ENCODE measurements at regions of chr14 and their contacts with region 1.

Region 1: DNA sequence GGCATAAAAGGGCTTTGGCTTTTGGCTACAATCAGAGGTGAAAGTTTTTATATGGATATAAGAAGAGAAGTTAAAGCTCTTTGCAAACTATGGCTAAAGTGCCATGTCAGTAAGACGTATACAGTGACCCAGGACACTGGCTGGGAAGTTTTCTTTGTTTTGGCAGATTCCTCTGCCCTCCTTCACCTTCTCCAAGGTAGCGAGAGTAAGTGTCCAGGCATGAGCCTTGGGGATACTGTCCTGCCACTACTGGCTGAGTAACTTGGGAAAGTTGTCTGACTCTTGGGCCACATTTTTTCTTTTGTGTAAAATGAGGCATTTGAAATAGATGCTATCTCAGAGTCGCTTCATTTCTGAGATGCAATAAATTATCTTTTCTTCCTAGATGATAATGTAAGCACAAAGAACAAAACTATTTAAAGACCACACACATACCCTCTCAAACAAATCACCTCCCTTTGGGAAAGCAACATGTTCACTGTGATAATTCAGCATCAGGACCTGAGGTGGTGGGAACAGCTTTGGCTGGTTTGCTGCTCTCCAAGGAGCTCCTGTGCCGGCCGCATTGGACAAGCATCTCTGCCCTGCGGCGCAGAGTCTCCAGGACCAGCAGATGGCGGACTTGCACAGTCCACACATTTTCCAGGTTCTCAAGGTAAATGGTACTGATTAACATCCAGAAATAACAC is 106.3 kb downstream of the PTCSC3 start:
- H3K4me3 ChIP-seq: no peak overlapping the region
- H3K27ac ChIP-seq: no peak overlapping the region
- H3K4me1 ChIP-seq: 0 out of 2 replicates have a peak, but pooled peaks cover 3% of the 10 kb centered on the region
- CTCF ChIP-seq: peak; percentile 58; the same call in 1 of the 2 replicates

Region 2: DNA sequence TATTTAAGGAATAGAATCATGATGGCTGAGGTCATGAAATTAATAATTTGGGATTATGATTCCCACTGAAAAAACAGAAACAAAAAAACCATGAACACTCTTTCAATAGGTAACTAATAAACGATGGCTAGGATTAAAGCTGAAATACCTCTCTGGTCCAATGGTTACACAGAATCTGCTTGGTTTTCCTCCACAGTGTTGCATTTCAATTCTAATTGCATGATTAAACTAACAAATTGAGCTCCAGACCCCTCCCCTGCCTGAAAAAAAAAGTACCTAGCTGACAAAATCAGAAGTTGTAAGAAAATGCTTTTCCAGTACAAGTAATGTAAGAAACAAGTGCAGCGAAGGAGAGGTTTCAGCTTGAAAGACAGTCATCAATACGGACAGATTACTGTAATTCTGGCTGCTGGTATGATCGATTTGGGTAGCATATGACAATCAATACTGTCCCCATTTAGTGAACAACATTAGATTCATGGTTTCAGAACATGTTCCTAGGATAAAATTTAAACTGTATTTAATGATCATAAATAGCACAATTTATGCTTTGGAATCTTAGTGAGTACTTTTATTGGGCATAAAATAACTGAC is 504.2 kb before region 1 on chr14:
- CTCF ChIA-PET with region 1: no interaction called
- POLR2A ChIA-PET with region 1: no interaction called
- H3K4me3 ChIP-seq: no peak overlapping the region
- H3K27ac ChIP-seq: no peak overlapping the region
- H3K4me1 ChIP-seq: no peaks in the 10 kb centered on the region
- CTCF ChIP-seq: no peak

Region 3: GRCh38 chr14:35883677-35884293 is 186.4 kb before region 1 on chr14:
- CTCF ChIA-PET with region 1: interaction called, 50 read pairs
- POLR2A ChIA-PET with region 1: no interaction called
- H3K4me3 ChIP-seq: no peak overlapping the region
- H3K27ac ChIP-seq: no peak overlapping the region
- H3K4me1 ChIP-seq: no peaks in the 10 kb centered on the region
- CTCF ChIP-seq: no peak

Region 4: DNA sequence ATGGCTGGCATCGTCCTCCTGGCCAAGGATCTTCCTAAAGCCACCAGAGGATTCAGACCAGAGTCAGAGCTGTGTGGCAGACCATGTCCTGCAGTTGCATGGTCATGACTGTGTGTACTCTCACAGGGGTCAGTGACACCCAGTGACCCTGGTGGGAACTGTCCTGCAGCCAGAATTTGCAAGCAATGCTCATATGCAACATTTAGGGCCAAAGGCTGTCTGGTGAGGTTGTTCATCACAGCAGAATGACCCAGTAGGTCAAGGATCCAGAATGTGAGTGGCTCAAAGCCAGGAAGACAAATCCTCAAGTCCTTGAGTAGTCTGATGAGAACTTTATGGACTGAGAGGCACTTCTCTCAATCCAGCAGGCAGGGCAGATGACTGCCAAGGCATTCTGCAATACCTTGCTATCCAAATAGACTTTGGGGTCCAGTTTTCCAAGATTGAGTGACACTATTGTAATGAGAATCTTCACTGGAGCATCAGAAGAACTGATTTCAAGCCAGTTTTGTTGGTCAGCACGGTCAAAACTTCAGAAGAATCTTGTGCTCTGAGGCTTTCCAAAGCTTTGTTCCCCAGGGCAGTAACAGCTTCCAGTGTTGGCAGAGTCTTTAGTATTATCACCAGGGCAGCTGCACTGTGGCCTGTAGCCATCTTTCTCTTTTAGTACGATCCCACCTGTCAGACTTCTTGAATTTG is 15.7 kb before region 1 on chr14:
- CTCF ChIA-PET with region 1: interaction called, 21 read pairs
- POLR2A ChIA-PET with region 1: no interaction called
- H3K4me3 ChIP-seq: no peak overlapping the region
- H3K27ac ChIP-seq: no peak overlapping the region
- H3K4me1 ChIP-seq: peaks cover 12% of the 10 kb centered on the region
- CTCF ChIP-seq: no peak

Region 5: GRCh38 chr14:36091096-36091495 is 20.9 kb after region 1 on chr14:
- CTCF ChIA-PET with region 1: interaction called, 11 read pairs
- POLR2A ChIA-PET with region 1: no interaction called
- H3K4me3 ChIP-seq: no peak overlapping the region
- H3K27ac ChIP-seq: no peak overlapping the region
- H3K4me1 ChIP-seq: peaks cover 6% of the 10 kb centered on the region; the same call in 1 of the 2 replicates
- CTCF ChIP-seq: no peak

Region 6: GRCh38 chr14:36520601-36521525 is 450.7 kb after region 1 on chr14:
- CTCF ChIA-PET with region 1: interaction called, 24 read pairs
- POLR2A ChIA-PET with region 1: no interaction called
- H3K4me3 ChIP-seq: peak overlapping the region; percentile 59
- H3K27ac ChIP-seq: peak overlapping the region; percentile 61; the same call in 1 of the 2 replicates
- H3K4me1 ChIP-seq: no peaks in the 10 kb centered on the region
- CTCF ChIP-seq: peak; percentile 72

Region 7: GRCh38 chr14:37150414-37150813 is 1080.2 kb after region 1 on chr14:
- CTCF ChIA-PET with region 1: interaction called, 13 read pairs
- POLR2A ChIA-PET with region 1: no interaction called
- H3K4me3 ChIP-seq: no peak overlapping the region; the same call in 1 of the 2 replicates
- H3K27ac ChIP-seq: no peak overlapping the region
- H3K4me1 ChIP-seq: peaks cover 6% of the 10 kb centered on the region; the same call in 1 of the 2 replicates
- CTCF ChIP-seq: peak; percentile 19; the same call in 1 of the 2 replicates